ENCODE measurements at regions of chr3 and their contacts with region 1.

Region 1: GRCh38 chr3:10248184-10249080 is at the start of gene TATDN2:
- DNase-seq: peak; percentile 100
- H3K4me3 ChIP-seq: peak within 1 kb of the TSS; percentile 88
- H3K27ac ChIP-seq: peak within 1 kb of the TSS; percentile 82
- H3K4me1 ChIP-seq: peaks cover 21% of the 10 kb centered on the region
- CTCF ChIP-seq: peak; percentile 26; the same call in 1 of the 2 replicates
- total RNA-seq, gene TATDN2: 22.0 and 22.9 TPM in 2 replicates

Region 2: GRCh38 chr3:9944271-9944670 is 304.2 kb before region 1 on chr3:
- CTCF ChIA-PET with region 1: no interaction called
- POLR2A ChIA-PET with region 1: no interaction called
- intact Hi-C with region 1: no loop called
- DNase-seq: no peak
- H3K4me3 ChIP-seq: no peak overlapping the region
- H3K27ac ChIP-seq: no peak overlapping the region
- H3K4me1 ChIP-seq: no peaks in the 10 kb centered on the region
- CTCF ChIP-seq: no peak

Region 3: GRCh38 chr3:9986237-9986725 is 262.2 kb before region 1 on chr3:
- CTCF ChIA-PET with region 1: no interaction called
- POLR2A ChIA-PET with region 1: no interaction called
- intact Hi-C with region 1: loop called (anchors 1 kb)
- DNase-seq: no peak
- H3K4me3 ChIP-seq: peak overlapping the region; percentile 96
- H3K27ac ChIP-seq: peak overlapping the region; percentile 81
- H3K4me1 ChIP-seq: peaks cover 19% of the 10 kb centered on the region
- CTCF ChIP-seq: no peak

Region 4: GRCh38 chr3:10026084-10026890 is 222.1 kb before region 1 on chr3 and contains the start of gene FANCD2:
- CTCF ChIA-PET with region 1: no interaction called
- POLR2A ChIA-PET with region 1: no interaction called
- intact Hi-C with region 1: loop called (anchors 2 kb)
- DNase-seq: peak; percentile 90
- H3K4me3 ChIP-seq: peak within 1 kb of the TSS; percentile 98
- H3K27ac ChIP-seq: peak within 1 kb of the TSS; percentile 82
- H3K4me1 ChIP-seq: peaks cover 22% of the 10 kb centered on the region
- CTCF ChIP-seq: no peak
- total RNA-seq, gene FANCD2: 112 and 116 TPM in 2 replicates

Region 5: GRCh38 chr3:10142707-10143566 is 105.5 kb before region 1 on chr3:
- CTCF ChIA-PET with region 1: no interaction called
- POLR2A ChIA-PET with region 1: no interaction called
- intact Hi-C with region 1: loop called (anchors 2 kb)
- DNase-seq: peak; percentile 37
- H3K4me3 ChIP-seq: peak overlapping the region; percentile 83
- H3K27ac ChIP-seq: peak overlapping the region; percentile 69
- H3K4me1 ChIP-seq: peaks cover 37% of the 10 kb centered on the region
- CTCF ChIP-seq: no peak

Region 6: GRCh38 chr3:10213156-10213792 is 35.2 kb before region 1 on chr3:
- CTCF ChIA-PET with region 1: no interaction called
- POLR2A ChIA-PET with region 1: interaction called, 12 read pairs
- intact Hi-C with region 1: no loop called
- DNase-seq: peak; percentile 68
- H3K4me3 ChIP-seq: peak overlapping the region; percentile 5
- H3K27ac ChIP-seq: peak overlapping the region; percentile 16
- H3K4me1 ChIP-seq: peaks cover 50% of the 10 kb centered on the region
- CTCF ChIP-seq: no peak

Region 7: DNA sequence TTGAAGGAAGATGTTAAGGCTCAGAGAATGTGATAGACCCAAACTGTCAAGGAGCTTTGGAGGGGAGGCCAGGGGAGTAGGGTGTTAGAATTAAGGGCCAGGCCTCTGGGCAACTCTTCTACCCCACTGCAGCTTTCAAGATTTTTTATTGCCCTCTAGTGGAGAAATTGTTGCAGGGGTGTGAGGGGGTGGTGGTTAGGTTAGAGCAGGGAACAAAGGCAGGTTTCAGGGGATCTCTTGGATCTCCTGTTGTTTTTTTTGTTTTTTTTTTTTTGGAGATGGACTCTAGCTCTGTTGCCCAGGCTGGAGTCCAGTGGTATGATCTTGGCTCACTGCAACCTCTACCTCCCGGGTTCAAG is 73.9 kb after region 1 on chr3:
- CTCF ChIA-PET with region 1: no interaction called
- POLR2A ChIA-PET with region 1: no interaction called
- intact Hi-C with region 1: loop called (anchors 2 kb)
- DNase-seq: peak; percentile 64
- H3K4me3 ChIP-seq: no peak overlapping the region
- H3K27ac ChIP-seq: no peak overlapping the region
- H3K4me1 ChIP-seq: peaks cover 20% of the 10 kb centered on the region
- CTCF ChIP-seq: peak; percentile 83

Measured in OCI-LY7 (cell line).